ENCODE measurements at regions of chr5 and their contacts with region 1.

Region 1: DNA sequence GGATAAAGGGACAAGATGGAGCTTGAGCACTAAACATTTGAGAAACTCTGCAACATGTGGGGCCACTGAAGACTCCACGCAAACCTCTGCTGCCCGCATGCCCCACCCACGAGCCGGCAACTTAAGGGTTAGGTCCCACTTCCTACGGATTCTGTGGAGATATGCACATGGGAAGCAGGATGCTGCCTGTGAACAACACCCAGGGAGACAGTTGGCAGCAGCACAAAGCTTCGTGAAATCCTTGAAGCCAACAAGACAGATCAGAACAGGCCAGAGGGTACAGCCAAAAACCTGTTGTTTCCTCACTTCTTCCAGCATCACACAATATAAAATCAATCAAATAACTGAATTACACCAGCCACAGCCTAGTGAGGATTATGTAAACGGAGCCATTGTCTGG is 270.4 kb downstream of the ENC1 start:
- DNase-seq: no peak
- ATAC-seq: no peak
- H3K4me3 ChIP-seq: no peak overlapping the region
- H3K27ac ChIP-seq: no peak overlapping the region
- H3K4me1 ChIP-seq: no peaks in the 10 kb centered on the region
- H3K27me3 ChIP-seq: peaks cover 11% of the 10 kb centered on the region
- CTCF ChIP-seq: no peak
- POLR2A ChIP-seq: no peak
- RAD21 ChIP-seq: no peak

Region 2: DNA sequence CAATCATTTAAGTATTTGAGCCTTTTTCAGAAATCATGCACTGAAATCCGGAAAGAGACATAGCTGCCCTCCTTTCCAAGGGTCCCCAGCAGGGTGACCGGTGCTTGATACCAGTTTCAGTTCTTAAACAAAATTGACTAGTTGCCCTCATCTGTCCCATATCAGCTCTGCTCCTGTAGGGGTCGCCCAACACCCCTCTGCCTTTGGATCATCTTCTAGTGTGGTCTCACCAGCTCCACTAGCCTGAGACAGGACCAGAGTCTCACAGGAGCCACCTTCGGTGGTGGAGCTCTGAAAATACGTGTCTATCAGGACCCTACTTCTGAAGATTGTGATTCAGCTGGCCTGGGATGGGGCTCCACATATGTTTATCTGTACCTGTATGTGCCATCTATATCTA is 157.8 kb before region 1 on chr5:
- CTCF ChIA-PET with region 1: no interaction called
- POLR2A ChIA-PET with region 1: no interaction called
- dilution Hi-C with region 1: no loop called
- in situ Hi-C with region 1: no loop called
- intact Hi-C with region 1: loop called (anchors 5 kb)
- DNase-seq: peak; percentile 30
- ATAC-seq: peak; percentile 24; the same call in 1 of the 2 replicates
- H3K4me3 ChIP-seq: no peak overlapping the region
- H3K27ac ChIP-seq: no peak overlapping the region
- H3K4me1 ChIP-seq: no peaks in the 10 kb centered on the region
- H3K27me3 ChIP-seq: peaks cover 20% of the 10 kb centered on the region
- CTCF ChIP-seq: peak; percentile 53
- POLR2A ChIP-seq: no peak
- RAD21 ChIP-seq: peak; percentile 54